ENCODE measurements at regions of chr20 and their contacts with region 1.

Region 1: GRCh38 chr20:43666376-43667328 is at the start of gene MYBL2:
- DNase-seq: peak; percentile 67
- H3K4me3 ChIP-seq: peak within 1 kb of the TSS; percentile 33
- H3K27ac ChIP-seq: no peak within 1 kb of the TSS
- H3K4me1 ChIP-seq: peaks cover 14% of the 10 kb centered on the region
- H3K27me3 ChIP-seq: no peaks in the 10 kb centered on the region
- CTCF ChIP-seq: no peak
- total RNA-seq, gene MYBL2: 15.1 to 71.1 TPM

Region 2: GRCh38 chr20:43456809-43457639 is 209.6 kb before region 1 on chr20:
- intact Hi-C with region 1: loop called (anchors 10 kb)
- DNase-seq: peak; percentile 92
- H3K4me3 ChIP-seq: peak overlapping the region; percentile 78
- H3K27ac ChIP-seq: peak overlapping the region; percentile 97
- H3K4me1 ChIP-seq: peaks cover 8% of the 10 kb centered on the region
- H3K27me3 ChIP-seq: no peaks in the 10 kb centered on the region
- CTCF ChIP-seq: no peak

Measured in colonic mucosa (tissue), 4 donors.